ENCODE measurements at regions of chr19 and their contacts with region 1.

Region 1: DNA sequence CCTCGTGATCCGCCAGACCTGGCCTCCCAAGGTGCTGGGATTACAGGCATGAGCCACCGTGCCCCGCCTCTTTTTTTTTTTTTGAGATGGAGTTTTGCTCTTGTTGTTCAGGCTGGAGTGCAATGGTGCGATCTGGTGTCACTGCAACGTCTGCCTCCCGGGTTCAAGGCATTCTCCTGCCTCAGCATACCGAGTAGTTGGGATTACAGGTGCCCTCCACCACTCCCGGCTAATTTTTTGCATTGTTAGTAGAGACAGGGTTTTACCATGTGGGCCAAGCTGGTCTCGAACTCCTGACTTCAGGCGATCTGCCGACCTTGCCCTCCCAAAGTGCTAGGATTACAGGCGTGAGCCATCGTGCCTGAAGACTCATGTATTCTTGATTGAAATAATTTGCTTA is 12.9 kb upstream of the ZNF701 start:
- DNase-seq: no peak
- ATAC-seq: no peak
- H3K4me3 Mint-ChIP-seq: no peak overlapping the region
- H3K27ac Mint-ChIP-seq: no peak overlapping the region
- H3K4me1 Mint-ChIP-seq: peaks cover 0 to 2% (median 0%) of the 10 kb centered on the region in 4 donors
- H3K27me3 Mint-ChIP-seq: no peaks in the 10 kb centered on the region

Region 2: GRCh38 chr19:52527134-52527955 is 29.9 kb before region 1 on chr19 and contains the start of gene ZNF808:
- POLR2A ChIA-PET with region 1: interaction called, 10 read pairs
- DNase-seq: peak; percentile 84 to 99 (median 93)
- ATAC-seq: peak; percentile 93
- H3K4me3 Mint-ChIP-seq: peak within 1 kb of the TSS; percentile 95 to 100 (median 98)
- H3K27ac Mint-ChIP-seq: peak within 1 kb of the TSS; percentile 94 to 100 (median 99)
- H3K4me1 Mint-ChIP-seq: peaks cover 17 to 40% (median 33%) of the 10 kb centered on the region in 4 donors
- H3K27me3 Mint-ChIP-seq: no peaks in the 10 kb centered on the region
- polyA plus RNA-seq, gene ZNF808: 8.0 to 13.2 (median 12.9) TPM

Region 3: DNA sequence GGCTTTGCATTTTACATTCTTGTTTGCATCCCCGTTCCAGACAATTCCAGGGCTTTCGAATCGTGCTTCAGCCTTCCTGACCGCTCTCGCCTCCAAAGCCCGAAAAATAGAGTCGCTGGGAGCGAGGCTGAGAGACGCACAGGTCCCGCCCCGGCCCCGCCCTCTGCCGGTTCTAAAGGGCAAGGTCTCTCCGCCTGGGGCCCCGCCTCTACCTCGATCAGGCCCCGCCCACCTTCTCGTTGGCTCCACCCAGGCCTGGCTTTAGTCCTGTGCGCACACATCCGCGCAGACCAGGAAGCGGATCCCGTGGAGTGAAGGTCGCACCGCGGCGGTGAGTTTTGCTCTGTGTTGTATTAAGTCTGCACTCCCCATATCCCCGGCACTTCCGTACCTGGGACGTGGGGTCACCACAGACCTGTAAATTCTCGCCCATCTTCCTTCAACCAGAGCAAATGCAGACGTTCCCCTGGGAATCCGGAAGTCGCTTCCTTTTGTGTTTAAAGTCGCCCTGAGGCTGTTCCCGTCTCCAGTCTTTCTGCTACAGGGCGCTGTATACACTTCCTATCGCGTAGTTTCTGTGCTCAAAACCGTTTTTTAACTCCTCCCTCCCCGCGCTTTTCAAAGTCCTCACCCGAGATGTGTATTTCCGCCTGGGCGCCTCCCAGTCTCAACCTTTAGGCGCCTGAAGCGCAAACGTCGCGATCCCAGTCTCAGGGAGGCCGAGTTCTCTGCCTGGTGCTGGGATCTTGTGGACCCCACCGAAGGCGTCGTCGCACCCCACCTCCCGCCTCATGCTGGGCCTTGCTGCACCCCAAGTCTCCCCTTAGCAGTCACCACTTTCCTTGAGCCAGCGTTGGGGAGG is 13.0 kb after region 1 on chr19 and contains the start of gene ZNF701:
- POLR2A ChIA-PET with region 1: no interaction called
- DNase-seq: peak; percentile 91 to 98 (median 96)
- ATAC-seq: peak; percentile 93 to 96
- H3K4me3 Mint-ChIP-seq: peak within 1 kb of the TSS; percentile 89 to 98 (median 95)
- H3K27ac Mint-ChIP-seq: peak within 1 kb of the TSS; percentile 83 to 99 (median 96)
- H3K4me1 Mint-ChIP-seq: peaks cover 14 to 38% (median 37%) of the 10 kb centered on the region in 4 donors
- H3K27me3 Mint-ChIP-seq: no peaks in the 10 kb centered on the region
- polyA plus RNA-seq, gene ZNF701: 13.6 to 14.4 (median 14.1) TPM

Measured in naive thymus-derived CD8-positive, alpha-beta T cell (primary cell).